ENCODE measurements at regions of chr4 and their contacts with region 1.

Region 1: DNA sequence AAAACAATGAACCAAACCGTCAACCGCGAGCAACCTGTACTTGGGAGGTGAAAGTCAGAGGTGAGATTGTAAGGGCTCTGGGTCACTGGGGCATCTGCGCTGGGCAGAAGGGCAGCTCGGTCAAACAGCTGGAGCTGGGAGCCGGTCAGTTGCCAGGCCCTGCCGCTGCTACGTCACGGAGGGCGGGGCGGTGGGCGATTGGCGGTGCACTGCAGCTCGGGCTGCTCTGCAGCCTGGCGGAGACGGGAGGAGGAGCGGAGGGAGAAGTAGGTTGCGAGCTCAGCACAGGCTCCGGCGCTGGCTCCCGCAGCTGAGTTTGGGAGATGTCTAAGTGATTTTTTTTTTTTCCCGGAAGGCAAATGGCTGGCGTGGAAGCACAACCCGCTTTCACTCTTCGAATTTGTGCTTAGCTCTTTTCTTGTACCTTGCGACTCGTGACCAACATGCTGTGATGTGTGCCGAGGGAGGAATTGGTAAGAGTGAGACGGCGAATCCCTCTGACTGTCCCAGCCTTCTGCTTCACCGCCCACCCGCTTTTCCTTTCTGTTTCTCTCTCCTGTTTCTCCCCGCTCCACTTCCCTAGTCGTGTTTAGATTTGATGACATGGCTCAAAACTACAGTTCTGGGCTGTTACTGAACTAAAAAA is at the start of gene ATP10D:
- DNase-seq: peak; percentile 95 to 96
- ATAC-seq: peak; percentile 99 to 100 (median 100)
- H3K4me3 ChIP-seq: peak within 1 kb of the TSS; percentile 74
- H3K27ac ChIP-seq: peak within 1 kb of the TSS; percentile 81
- H3K4me1 ChIP-seq: no peaks in the 10 kb centered on the region
- H3K27me3 ChIP-seq: no peaks in the 10 kb centered on the region
- CTCF ChIP-seq: peak; percentile 27
- total RNA-seq, gene ATP10D: 1.6 to 6.1 (median 4.4) TPM

Region 2: GRCh38 chr4:47463235-47463956 is 21.8 kb before region 1 on chr4 and contains the start of gene COMMD8:
- intact Hi-C with region 1: loop called in 1 of 2 experiments (anchors 2 kb)
- DNase-seq: peak; percentile 95 to 97
- ATAC-seq: peak; percentile 98 to 100 (median 100)
- H3K4me3 ChIP-seq: peak within 1 kb of the TSS; percentile 93
- H3K27ac ChIP-seq: peak within 1 kb of the TSS; percentile 74
- H3K4me1 ChIP-seq: no peaks in the 10 kb centered on the region
- H3K27me3 ChIP-seq: no peaks in the 10 kb centered on the region
- CTCF ChIP-seq: peak; percentile 36
- total RNA-seq, gene COMMD8: 4.9 to 6.2 (median 5.7) TPM

Region 3: DNA sequence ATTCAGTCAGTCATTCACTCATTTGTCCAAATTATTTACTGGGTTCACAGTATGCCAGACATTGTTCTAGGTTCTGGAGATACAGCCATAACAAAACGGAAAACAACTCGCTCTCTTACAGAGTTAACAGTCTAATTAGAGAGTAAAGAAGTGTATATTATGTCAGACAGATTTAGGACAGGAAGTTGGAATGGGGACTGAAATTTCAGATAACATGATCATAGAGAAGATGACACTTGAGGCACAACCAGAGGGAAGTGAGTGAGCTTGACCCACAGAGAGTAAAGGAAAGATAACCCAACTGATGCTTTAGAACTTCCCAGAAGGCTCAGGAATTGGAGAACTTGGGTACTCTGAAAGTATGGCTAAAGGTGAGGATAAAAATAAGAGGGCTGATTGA is 1144.3 kb after region 1 on chr4:
- intact Hi-C with region 1: loop called in 1 of 2 experiments (anchors 5 kb)
- DNase-seq: no peak
- ATAC-seq: no peak
- H3K4me3 ChIP-seq: no peak overlapping the region
- H3K27ac ChIP-seq: no peak overlapping the region
- H3K4me1 ChIP-seq: peaks cover 5% of the 10 kb centered on the region
- H3K27me3 ChIP-seq: no peaks in the 10 kb centered on the region
- CTCF ChIP-seq: no peak

Measured in psoas muscle (tissue), 8 donors.